Activated naive CD4-positive, alpha-beta T cell treated with anti-CD3 and anti-CD28 coated beads for 36 hours (primary cell): ENCODE measurements at regions of chr1 and their contacts with region 1.

Region 1: DNA sequence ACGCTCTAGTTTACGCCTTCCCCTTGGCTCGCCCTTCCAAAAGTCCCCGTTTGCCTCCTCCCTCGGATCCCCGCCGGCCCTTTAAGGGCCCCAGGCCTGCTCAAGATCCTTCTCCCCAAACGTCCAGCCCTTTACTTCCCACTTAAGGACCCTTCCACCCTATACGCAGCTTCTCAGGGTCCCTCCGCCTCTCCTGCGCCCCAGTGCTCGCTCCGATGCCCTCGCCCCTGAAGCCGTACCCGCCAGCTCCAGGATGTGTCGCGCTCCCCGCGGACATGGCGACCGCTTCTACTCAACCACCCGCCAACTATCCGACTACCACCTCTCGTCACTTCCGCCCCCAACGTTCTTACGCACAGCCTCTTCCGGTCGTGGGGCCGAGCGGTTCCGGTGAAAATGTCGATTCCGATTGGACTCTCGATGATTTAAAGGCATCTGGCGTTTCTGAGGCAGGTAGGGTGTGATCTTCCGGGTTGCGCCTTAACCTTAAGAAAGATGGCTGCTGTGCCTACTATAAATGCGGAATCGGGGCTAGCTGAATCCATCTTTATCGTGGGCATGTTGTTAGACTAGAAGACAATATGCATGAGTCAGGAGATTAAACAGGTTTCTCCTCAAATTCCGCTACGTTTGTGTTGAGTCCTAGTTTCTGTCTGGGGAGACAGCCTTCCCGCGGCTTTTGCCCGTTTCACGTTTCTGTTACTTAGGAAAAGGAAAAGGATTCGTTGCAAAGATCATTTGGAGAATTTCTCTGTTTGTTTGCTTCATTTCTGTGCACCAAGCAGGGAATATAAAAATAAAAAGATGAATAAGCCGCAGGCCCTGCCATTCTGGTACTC is at the start of gene KHDC4:
- DNase-seq: peak; percentile 97
- H3K4me3 Mint-ChIP-seq: no peak within 1 kb of the TSS
- H3K27ac Mint-ChIP-seq: no peak within 1 kb of the TSS
- H3K4me1 Mint-ChIP-seq: peaks cover 46% of the 10 kb centered on the region
- H3K27me3 Mint-ChIP-seq: no peaks in the 10 kb centered on the region
- total RNA-seq, gene KHDC4: 82.3 to 87.2 TPM

Region 2: DNA sequence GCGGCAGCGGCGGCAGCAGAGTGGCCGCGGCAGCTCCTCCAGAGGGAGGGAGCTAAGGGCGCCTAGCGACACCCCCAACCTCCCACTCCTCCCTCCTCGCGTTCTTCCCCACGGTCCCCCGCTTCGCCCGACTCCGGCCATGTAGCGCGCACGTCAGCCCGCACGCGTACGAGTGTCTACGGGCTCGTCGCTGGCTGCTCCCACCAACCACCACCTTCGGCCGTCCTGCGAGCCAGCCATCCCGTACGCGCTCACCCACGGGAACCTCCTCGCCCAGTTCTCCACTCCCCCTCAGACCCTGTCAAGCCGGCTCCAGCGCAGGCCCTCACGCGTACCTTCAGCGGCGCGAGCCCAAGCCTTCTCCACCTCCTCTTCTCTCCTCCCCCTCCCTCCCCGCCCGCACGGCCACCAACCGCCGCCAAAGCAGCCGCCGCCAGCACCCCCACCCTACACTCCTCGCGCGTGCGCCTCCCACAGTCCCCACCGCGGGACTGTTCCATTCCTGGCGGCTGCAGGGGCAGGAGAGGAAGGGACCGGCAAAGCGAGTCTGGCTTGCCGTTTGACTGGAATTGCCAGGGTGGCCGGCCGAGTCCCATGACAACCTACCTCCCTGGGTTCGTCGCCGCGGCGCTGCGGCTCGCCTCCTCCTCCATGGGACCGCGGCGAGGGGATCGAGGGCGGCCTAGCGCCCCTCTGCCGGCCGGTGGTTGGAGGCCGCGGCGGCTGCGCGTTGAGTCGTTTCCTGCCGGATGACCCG is 245.8 kb before region 1 on chr1 and contains the start of gene YY1AP1:
- CTCF ChIA-PET with region 1: no interaction called
- intact Hi-C with region 1: loop called (anchors 1 kb)
- DNase-seq: peak; percentile 93
- H3K4me3 Mint-ChIP-seq: peak within 1 kb of the TSS; percentile 97
- H3K27ac Mint-ChIP-seq: peak within 1 kb of the TSS; percentile 95
- H3K4me1 Mint-ChIP-seq: peaks cover 70% of the 10 kb centered on the region
- H3K27me3 Mint-ChIP-seq: no peaks in the 10 kb centered on the region
- total RNA-seq, gene YY1AP1: 54.8 to 59.5 TPM

Region 3: DNA sequence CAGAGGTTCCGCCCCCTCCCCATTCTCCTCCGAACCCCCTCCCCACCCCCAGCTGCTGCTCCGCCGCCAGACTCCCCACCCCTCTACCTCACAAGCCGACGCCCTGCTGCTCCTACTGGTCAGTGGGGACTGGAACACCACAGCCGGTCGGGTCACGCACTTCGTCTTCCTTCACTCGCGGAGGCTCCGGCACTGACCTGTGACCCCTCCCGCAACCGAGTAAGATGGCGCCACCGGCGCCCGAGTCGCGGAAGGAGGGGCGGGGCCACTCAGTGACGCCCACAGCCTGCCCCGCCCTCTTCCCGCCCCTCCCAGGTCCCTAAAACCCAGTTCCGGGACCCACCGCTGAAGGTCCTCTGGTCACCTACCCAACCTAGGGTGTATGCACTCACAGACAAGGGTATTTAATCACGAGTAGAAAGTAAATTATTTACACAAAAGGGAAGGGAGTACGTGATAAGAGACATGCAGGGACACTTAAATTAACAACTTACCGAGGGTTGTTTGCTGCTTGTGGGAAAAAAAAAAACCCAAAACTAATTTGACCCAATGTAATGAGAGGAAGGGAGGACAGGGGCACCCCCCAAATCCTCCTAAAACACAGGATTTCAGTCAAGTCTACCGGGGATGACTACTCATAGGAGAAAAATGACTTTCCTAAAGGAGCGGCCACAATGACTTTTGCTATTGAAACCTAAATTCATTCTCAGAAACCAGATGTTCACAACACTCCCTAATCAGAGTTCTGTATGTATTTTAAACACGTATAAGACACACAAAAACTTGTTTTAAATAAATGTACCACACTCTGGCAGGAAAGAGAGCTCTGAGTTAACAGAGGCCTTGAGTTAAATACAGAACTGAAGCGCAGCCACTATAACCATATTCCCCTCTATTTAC is 22.9 kb before region 1 on chr1 and contains the start of gene RIT1:
- CTCF ChIA-PET with region 1: interaction called, 5 read pairs
- intact Hi-C with region 1: loop called (anchors 1 kb)
- DNase-seq: peak; percentile 89
- H3K4me3 Mint-ChIP-seq: peak within 1 kb of the TSS; percentile 99
- H3K27ac Mint-ChIP-seq: peak within 1 kb of the TSS; percentile 97
- H3K4me1 Mint-ChIP-seq: peaks cover 21% of the 10 kb centered on the region
- H3K27me3 Mint-ChIP-seq: no peaks in the 10 kb centered on the region
- total RNA-seq, gene RIT1: 17.1 to 21.3 TPM

Region 4: GRCh38 chr1:155970531-155971167 is 36.3 kb after region 1 on chr1:
- CTCF ChIA-PET with region 1: interaction called, 21 read pairs
- intact Hi-C with region 1: no loop called
- DNase-seq: peak; percentile 69
- H3K4me3 Mint-ChIP-seq: peak overlapping the region; percentile 60
- H3K27ac Mint-ChIP-seq: peak overlapping the region; percentile 96
- H3K4me1 Mint-ChIP-seq: peaks cover 92% of the 10 kb centered on the region
- H3K27me3 Mint-ChIP-seq: no peaks in the 10 kb centered on the region

Region 5: GRCh38 chr1:155989242-155990004 is 55.1 kb after region 1 on chr1:
- CTCF ChIA-PET with region 1: interaction called, 135 read pairs
- intact Hi-C with region 1: loop called (anchors 1 kb)
- DNase-seq: peak; percentile 87
- H3K4me3 Mint-ChIP-seq: no peak overlapping the region
- H3K27ac Mint-ChIP-seq: no peak overlapping the region
- H3K4me1 Mint-ChIP-seq: peaks cover 4% of the 10 kb centered on the region
- H3K27me3 Mint-ChIP-seq: no peaks in the 10 kb centered on the region

Region 6: DNA sequence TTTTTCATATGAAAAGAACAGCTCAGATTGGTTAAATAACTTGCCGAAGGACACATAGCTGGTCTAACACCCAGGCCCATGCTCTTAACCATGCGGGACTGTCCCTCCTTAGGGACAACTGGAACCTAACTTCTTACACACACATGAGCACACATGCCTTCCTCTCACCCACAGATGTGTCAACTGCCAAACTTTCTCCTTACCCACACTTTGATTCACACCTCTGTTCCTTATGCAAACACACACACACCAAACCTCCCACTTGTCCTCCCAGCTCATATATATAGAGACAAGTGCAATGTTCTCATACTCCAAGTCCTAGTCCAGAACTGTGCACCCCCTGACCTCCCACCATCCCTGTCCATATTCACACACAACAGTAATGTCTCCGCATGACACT is 130.9 kb after region 1 on chr1:
- CTCF ChIA-PET with region 1: interaction called, 16 read pairs
- intact Hi-C with region 1: loop called (anchors 1 kb)
- DNase-seq: no peak
- H3K4me3 Mint-ChIP-seq: no peak overlapping the region
- H3K27ac Mint-ChIP-seq: no peak overlapping the region
- H3K4me1 Mint-ChIP-seq: peaks cover 14% of the 10 kb centered on the region
- H3K27me3 Mint-ChIP-seq: no peaks in the 10 kb centered on the region